ENCODE measurements at regions of chr19 and their contacts with region 1.

Region 1: DNA sequence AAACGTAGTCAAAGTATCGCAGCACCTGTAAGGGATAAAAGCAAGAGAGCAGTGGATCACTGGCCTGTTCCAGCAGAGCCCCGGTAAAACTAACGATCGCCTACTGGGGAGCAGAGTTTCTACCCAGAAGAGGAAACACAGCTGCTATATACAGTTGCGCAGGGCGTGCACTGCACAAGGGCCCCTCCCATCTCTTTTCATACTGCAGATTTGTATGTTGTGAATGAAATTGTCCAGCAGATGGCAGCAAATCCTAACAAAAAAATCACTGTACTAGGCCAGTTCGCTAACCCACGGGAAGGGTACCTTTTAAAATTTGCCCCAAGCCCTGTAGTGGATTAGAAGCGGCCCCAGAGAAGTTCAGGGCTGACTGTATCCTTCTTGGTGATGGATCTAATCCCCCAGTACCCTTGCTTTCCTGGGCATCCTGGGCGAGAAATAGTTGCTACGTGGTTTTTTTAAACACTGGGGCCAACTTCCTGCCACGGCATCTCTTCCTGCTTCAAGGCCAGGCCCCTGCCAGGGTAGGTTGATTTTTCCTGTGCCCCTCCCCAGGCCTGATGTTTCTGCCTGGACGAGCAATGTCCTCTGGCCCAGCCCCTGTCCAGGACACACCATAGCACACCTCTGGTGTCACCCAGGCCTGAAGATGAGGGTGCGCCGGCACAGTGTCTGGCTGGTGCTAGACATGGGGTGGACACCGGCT is 127.0 kb downstream of the IER2 start:
- DNase-seq: no peak
- H3K4me3 ChIP-seq: no peak overlapping the region
- H3K27ac ChIP-seq: no peak overlapping the region
- H3K4me1 ChIP-seq: peaks cover 0 to 5% (median 3%) of the 10 kb centered on the region in 4 donors
- H3K27me3 ChIP-seq: peaks cover 0 to 20% (median 4%) of the 10 kb centered on the region in 4 donors
- CTCF ChIP-seq: peak; percentile 67 to 81 (median 70)
- EP300 ChIP-seq: no peak
- POLR2A ChIP-seq: no peak

Region 2: GRCh38 chr19:13430790-13431582 is 153.7 kb after region 1 on chr19:
- intact Hi-C with region 1: loop called (anchors 5 kb)
- DNase-seq: no peak
- H3K4me3 ChIP-seq: no peak overlapping the region
- H3K27ac ChIP-seq: no peak overlapping the region
- H3K4me1 ChIP-seq: no peaks in the 10 kb centered on the region
- H3K27me3 ChIP-seq: peaks cover 0 to 37% (median 0%) of the 10 kb centered on the region in 4 donors
- CTCF ChIP-seq: peak in 2 of 3 experiments; percentile 43 to 51
- EP300 ChIP-seq: no peak
- POLR2A ChIP-seq: no peak

Region 3: GRCh38 chr19:13588957-13589833 is 311.9 kb after region 1 on chr19:
- intact Hi-C with region 1: loop called (anchors 1 kb)
- DNase-seq: no peak
- H3K4me3 ChIP-seq: no peak overlapping the region
- H3K27ac ChIP-seq: no peak overlapping the region
- H3K4me1 ChIP-seq: peaks cover 0 to 8% (median 5%) of the 10 kb centered on the region in 4 donors
- H3K27me3 ChIP-seq: peaks cover 0 to 70% (median 6%) of the 10 kb centered on the region in 4 donors
- CTCF ChIP-seq: peak; percentile 85 to 97 (median 97)
- EP300 ChIP-seq: no peak
- POLR2A ChIP-seq: no peak

Region 4: DNA sequence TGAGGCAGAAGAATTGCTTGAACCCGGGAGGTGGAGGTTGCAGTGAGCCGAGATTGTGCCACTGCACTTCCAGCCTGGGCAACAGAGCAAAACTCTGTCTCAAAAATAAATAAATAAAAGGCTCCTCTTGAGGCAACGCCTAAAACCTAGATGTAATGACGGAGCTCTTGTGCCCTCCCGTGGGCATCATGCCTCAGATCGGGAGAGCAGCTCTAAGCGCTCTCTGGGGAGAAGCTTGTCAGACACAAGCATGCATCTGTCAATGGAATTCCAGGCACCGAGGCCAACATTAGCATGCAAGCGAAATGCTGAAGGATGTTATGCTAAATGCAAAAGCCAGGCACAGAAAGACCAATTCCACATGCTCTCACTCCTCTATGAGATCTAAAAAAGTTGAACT is 441.5 kb after region 1 on chr19:
- intact Hi-C with region 1: loop called (anchors 5 kb)
- DNase-seq: no peak
- H3K4me3 ChIP-seq: no peak overlapping the region
- H3K27ac ChIP-seq: no peak overlapping the region
- H3K4me1 ChIP-seq: peaks cover 0 to 5% (median 0%) of the 10 kb centered on the region in 4 donors
- H3K27me3 ChIP-seq: no peaks in the 10 kb centered on the region
- CTCF ChIP-seq: peak; percentile 28 to 41 (median 35)
- EP300 ChIP-seq: no peak
- POLR2A ChIP-seq: no peak

Measured in esophagus muscularis mucosa (tissue), 4 donors.